Activated naive CD4-positive, alpha-beta T cell treated with anti-CD3 and anti-CD28 coated beads for 36 hours (primary cell): ENCODE measurements at regions of chr17 and their contacts with region 1.

Region 1: DNA sequence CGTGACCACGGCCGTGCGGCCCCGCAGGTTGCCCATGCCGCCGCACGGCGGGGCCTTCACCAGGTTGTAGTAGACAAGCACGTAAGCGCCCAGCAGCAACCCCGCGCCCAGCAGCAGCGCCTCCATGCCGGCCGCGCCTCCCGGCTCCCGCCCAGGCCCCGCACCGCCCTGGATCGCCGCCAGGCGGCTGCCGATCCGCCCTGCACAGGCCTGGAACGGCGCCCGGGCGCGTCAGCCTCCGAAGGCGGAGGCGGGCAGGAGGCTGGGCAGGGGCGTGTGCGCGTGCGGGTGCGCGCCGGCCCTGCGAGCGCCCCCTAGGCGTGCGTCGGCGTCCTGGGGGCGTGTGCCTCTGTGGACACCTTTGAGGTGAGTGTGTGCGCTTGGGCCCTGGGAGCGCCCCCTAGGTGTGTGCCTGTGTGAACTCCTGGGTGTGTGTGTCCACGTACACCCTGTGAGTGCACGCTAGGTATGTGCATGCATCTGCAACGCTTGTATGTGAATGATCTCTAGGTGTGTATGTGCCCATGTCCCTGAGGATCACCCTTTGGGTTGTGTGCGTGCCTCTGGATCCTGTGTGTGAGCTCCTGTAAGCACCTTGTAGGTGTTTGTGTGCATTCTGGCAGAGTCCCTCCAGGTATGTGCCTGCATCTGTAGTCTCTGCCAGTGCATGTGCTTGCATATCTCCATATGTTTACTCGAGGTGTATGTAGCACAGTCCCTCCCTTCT is at the start of gene DHRS13:
- DNase-seq: peak; percentile 93
- H3K4me3 Mint-ChIP-seq: peak within 1 kb of the TSS; percentile 98
- H3K27ac Mint-ChIP-seq: peak within 1 kb of the TSS; percentile 88
- H3K4me1 Mint-ChIP-seq: peaks cover 35% of the 10 kb centered on the region
- H3K27me3 Mint-ChIP-seq: no peaks in the 10 kb centered on the region
- total RNA-seq, gene DHRS13: 20.1 to 20.9 TPM

Region 2: DNA sequence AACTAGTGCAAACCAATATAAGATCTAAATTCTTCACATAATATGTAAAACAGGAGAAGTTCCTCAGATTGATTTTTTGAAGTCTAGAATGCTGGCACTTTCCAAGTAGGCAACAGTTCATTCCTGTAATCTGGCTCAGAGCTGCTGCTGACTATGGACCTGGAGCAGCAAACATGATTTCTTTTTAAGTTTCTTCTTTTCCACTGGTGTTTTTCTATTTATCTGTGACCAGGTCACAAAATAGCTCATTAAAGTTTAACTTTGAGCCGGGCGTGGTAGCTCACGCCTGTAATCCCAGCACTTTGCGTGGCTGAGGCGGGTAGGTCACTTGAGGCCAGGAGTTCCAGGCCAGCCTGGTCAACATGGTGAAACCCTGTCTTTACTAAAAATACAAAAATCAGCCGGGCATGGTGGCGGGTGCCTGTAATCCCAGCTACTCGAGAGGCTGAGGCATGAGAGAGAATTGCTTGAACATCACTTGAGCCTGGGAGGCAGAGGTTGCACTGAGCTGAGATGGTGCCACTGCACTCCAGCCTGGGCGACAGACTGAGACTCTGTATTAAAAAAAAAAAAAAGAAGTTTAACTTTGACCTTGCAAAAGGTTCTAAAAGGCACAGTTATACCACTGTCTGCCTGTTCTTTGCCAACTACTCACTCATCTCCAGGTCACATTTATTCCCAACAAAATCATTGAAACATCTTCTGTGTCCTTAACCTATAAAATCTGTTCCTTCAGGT is 458.9 kb before region 1 on chr17:
- CTCF ChIA-PET with region 1: no interaction called
- intact Hi-C with region 1: no loop called
- DNase-seq: no peak
- H3K4me3 Mint-ChIP-seq: no peak overlapping the region
- H3K27ac Mint-ChIP-seq: no peak overlapping the region
- H3K4me1 Mint-ChIP-seq: no peaks in the 10 kb centered on the region
- H3K27me3 Mint-ChIP-seq: peaks cover 5% of the 10 kb centered on the region

Region 3: DNA sequence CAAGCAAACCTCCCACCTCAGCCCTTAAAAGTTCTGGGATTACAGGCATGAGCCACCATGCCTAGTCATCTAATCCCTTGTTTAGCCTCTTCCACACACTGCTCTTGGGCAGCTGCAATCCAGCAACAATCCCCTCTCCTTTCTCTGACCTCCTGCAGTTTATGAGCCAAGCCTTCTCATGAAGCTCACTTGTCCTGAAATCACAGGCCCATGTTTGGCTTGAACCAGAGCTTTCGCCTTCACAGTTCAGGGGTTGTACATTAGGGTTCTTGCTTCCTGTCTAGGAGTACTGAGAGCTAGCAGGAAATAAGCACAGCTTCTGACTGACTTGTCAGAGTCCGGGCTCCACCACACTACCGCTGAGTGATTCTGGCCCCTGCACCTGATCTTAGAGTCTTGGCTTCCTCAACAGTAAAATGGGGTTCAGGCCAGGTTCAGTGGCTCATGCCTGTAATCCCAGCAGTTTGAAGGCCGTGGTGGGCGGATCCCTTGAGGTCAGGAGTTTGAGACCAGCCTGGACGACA is 31.9 kb before region 1 on chr17:
- CTCF ChIA-PET with region 1: interaction called, 10 read pairs
- intact Hi-C with region 1: loop called (anchors 1 kb)
- DNase-seq: peak; percentile 85
- H3K4me3 Mint-ChIP-seq: no peak overlapping the region
- H3K27ac Mint-ChIP-seq: peak overlapping the region; percentile 85
- H3K4me1 Mint-ChIP-seq: peaks cover 26% of the 10 kb centered on the region
- H3K27me3 Mint-ChIP-seq: no peaks in the 10 kb centered on the region

Region 4: GRCh38 chr17:28892024-28892423 is 11.0 kb before region 1 on chr17:
- CTCF ChIA-PET with region 1: interaction called, 17 read pairs
- intact Hi-C with region 1: no loop called
- DNase-seq: no peak
- H3K4me3 Mint-ChIP-seq: no peak overlapping the region
- H3K27ac Mint-ChIP-seq: peak overlapping the region; percentile 77
- H3K4me1 Mint-ChIP-seq: peaks cover 62% of the 10 kb centered on the region
- H3K27me3 Mint-ChIP-seq: no peaks in the 10 kb centered on the region

Region 5: DNA sequence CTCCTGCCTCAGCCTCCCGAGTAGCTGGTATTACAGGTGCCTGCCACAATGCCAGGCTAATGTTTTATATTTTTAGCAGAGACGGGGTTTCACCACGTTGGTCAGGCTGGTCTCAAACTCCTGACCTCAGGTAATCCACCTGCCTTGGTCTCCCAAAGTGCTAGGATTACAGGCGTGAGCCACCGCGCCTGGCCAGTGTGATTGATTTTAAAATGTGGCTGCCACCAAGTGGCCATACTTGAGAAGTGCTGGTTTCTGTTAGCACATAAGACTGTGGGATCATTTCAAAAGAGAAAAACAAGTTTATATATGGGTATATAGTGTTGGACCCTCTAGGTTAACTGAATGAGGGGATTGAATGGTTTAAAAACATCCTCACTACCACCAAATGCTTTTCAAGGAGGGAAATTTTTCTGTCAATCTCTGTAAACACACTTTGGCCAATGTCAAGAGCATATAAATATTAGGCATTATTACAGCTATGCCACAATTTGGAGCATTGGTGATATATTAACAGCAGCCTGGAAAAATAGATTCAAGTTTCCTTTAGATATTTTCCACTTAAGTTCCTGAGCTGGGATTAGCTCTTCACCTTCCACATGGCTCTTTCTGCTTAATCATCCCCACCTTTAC is 13.4 kb after region 1 on chr17:
- CTCF ChIA-PET with region 1: interaction called, 15 read pairs
- intact Hi-C with region 1: loop called (anchors 1 kb)
- DNase-seq: peak; percentile 62
- H3K4me3 Mint-ChIP-seq: no peak overlapping the region
- H3K27ac Mint-ChIP-seq: peak overlapping the region; percentile 34
- H3K4me1 Mint-ChIP-seq: peaks cover 13% of the 10 kb centered on the region
- H3K27me3 Mint-ChIP-seq: no peaks in the 10 kb centered on the region

Region 6: GRCh38 chr17:29195465-29196081 is 292.6 kb after region 1 on chr17:
- CTCF ChIA-PET with region 1: no interaction called
- intact Hi-C with region 1: no loop called
- DNase-seq: no peak
- H3K4me3 Mint-ChIP-seq: no peak overlapping the region
- H3K27ac Mint-ChIP-seq: no peak overlapping the region
- H3K4me1 Mint-ChIP-seq: peaks cover 3% of the 10 kb centered on the region
- H3K27me3 Mint-ChIP-seq: peaks cover 2% of the 10 kb centered on the region